Mammary epithelial cell (primary cell): ENCODE measurements at regions of chr4 and their contacts with region 1.

Region 1: GRCh38 chr4:139229534-139230039 is 50.4 kb downstream of the MGARP start:
- DNase-seq: peak; percentile 47
- H3K4me3 ChIP-seq: no peak overlapping the region
- H3K27ac ChIP-seq: no peak overlapping the region
- H3K4me1 ChIP-seq: no peaks in the 10 kb centered on the region
- H3K27me3 ChIP-seq: no peaks in the 10 kb centered on the region
- CTCF ChIP-seq: peak; percentile 73 to 75

Region 2: DNA sequence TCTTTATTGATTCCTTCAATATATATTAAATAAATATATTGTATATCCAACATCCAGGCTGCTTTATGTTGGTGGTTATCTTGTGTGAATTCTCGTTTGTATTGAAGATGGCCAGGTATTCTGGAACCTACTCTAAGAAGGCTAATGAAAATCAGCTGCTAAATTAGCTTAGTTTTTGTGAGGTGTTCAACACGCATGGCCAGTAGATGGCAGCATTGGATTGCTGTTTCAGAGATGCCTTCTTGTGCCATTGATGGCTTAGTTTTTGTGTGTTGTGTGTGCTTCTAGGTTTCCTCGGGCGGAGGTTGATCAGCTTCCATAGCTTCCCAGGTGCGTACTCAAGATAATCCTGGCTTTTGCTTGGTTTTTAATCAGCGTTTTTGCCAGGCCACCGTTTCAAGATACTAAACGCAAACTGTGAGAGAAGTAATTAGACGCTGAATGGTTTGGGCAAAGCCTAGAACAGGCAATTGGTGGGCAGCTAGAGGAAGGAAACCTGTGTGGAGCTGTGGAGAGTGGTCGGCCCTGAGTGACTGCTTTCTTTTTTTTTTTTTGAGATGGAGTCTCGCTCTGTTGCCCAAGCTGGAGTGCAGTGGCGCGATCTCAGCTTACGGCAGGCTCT is 198.9 kb before region 1 on chr4:
- CTCF ChIA-PET with region 1: interaction called, 7 read pairs
- dilution Hi-C with region 1: no loop called
- in situ Hi-C with region 1: no loop called
- intact Hi-C with region 1: loop called (anchors 2 kb)
- DNase-seq: peak; percentile 66
- H3K4me3 ChIP-seq: no peak overlapping the region
- H3K27ac ChIP-seq: no peak overlapping the region
- H3K4me1 ChIP-seq: no peaks in the 10 kb centered on the region
- H3K27me3 ChIP-seq: no peaks in the 10 kb centered on the region
- CTCF ChIP-seq: peak; percentile 82 to 93

Region 3: DNA sequence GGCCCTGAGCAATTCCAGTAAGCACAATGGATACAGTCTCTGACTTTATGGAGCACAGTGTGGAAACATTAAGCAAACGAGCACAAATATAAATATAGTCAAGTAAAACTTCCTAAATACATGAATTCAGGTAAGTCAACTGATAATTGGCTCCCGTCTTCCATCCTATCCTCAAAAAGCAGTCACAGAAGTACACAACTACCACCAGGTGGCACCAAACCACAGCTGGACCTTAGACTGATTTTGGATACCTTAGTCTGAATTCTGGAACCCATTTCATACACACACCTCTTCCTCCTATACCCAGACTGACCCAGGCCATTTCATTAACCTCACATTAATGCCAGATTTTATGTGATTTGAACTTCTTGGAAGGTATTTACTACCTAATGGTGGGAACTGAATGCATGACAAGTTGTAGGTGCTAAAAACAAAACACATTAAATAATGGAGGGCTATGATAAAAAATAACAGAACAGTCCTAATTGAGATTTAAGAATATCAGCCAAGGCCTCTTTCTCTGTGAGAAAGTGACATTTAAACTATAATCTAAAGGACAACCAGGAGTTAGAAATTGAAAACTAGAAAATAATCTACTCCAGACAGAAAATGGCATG is 130.1 kb before region 1 on chr4:
- CTCF ChIA-PET with region 1: no interaction called
- dilution Hi-C with region 1: no loop called
- in situ Hi-C with region 1: no loop called
- intact Hi-C with region 1: loop called (anchors 1 kb)
- DNase-seq: peak; percentile 70
- H3K4me3 ChIP-seq: no peak overlapping the region
- H3K27ac ChIP-seq: no peak overlapping the region
- H3K4me1 ChIP-seq: no peaks in the 10 kb centered on the region
- H3K27me3 ChIP-seq: no peaks in the 10 kb centered on the region
- CTCF ChIP-seq: peak; percentile 88 to 93

Region 4: GRCh38 chr4:139279760-139280620 is 50.4 kb after region 1 on chr4 and contains the start of gene MGARP:
- CTCF ChIA-PET with region 1: no interaction called
- dilution Hi-C with region 1: no loop called
- in situ Hi-C with region 1: no loop called
- intact Hi-C with region 1: loop called (anchors 5 kb)
- DNase-seq: peak; percentile 33
- H3K4me3 ChIP-seq: peak within 1 kb of the TSS; percentile 46 to 63 (median 48)
- H3K27ac ChIP-seq: no peak within 1 kb of the TSS
- H3K4me1 ChIP-seq: peaks cover 3% of the 10 kb centered on the region
- H3K27me3 ChIP-seq: no peaks in the 10 kb centered on the region
- CTCF ChIP-seq: no peak
- total RNA-seq, gene MGARP: 4.7 to 5.5 TPM

Region 5: GRCh38 chr4:139374251-139374650 is 144.7 kb after region 1 on chr4:
- CTCF ChIA-PET with region 1: no interaction called
- dilution Hi-C with region 1: no loop called
- in situ Hi-C with region 1: no loop called
- intact Hi-C with region 1: loop called (anchors 10 kb)
- DNase-seq: no peak
- H3K4me3 ChIP-seq: no peak overlapping the region
- H3K27ac ChIP-seq: no peak overlapping the region
- H3K4me1 ChIP-seq: no peaks in the 10 kb centered on the region
- H3K27me3 ChIP-seq: no peaks in the 10 kb centered on the region
- CTCF ChIP-seq: no peak